Caco-2 (cell line): ENCODE measurements at regions of chr3 and their contacts with region 1.

Region 1: DNA sequence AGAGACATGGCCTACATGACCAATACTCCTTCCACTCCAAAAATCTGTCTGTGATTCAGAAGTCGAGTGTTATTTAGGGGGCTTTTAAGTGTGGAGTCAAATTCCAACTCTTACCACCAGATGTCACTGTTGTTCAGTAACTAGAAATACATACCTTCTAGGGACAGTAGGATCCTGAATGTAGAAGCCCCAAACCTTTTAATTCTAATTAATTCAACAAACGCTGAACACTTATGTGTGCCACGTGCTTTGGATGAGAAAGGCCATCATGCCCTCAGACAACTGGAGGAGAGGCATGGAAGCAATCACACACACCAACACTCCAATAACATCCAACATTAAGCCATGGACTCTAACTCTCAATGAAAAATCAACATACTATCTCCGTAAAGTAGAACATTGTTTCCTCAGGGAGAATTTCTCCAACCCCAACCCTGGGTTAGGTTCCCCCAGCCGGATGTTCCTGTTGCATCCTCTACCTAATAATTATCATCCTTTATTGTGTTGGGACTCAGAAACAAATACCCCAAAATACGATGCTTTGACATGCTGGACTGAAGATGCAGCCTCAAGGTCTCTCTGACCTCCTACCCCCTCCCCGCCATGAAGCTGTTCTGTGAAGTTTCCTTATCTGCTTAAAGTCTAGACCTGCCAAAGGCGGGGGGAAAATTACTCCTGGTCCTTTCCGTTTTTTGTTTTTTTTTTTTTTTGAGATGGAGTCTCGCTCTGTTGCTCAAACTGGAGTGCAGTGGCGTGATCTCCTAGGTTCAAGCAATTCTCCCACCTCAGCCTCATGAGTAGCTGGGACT is 8.0 kb upstream of the CCDC13 start:
- DNase-seq: peak in 1 of 2 experiments; percentile 57
- H3K4me3 ChIP-seq: no peak overlapping the region
- H3K4me3 Mint-ChIP-seq: no peak overlapping the region
- H3K27ac Mint-ChIP-seq: no peak overlapping the region
- H3K4me1 ChIP-seq: no peaks in the 10 kb centered on the region
- H3K4me1 Mint-ChIP-seq: no peaks in the 10 kb centered on the region
- H3K27me3 ChIP-seq: no peaks in the 10 kb centered on the region
- H3K27me3 Mint-ChIP-seq: no peaks in the 10 kb centered on the region
- CTCF ChIP-seq: peak; percentile 56 to 71

Region 2: GRCh38 chr3:42831321-42831713 is 50.2 kb after region 1 on chr3:
- CTCF ChIA-PET with region 1: interaction called, 19 read pairs
- POLR2A ChIA-PET with region 1: no interaction called
- intact Hi-C with region 1: loop called (anchors 1 kb)
- DNase-seq: peak; percentile 64 to 75
- H3K4me3 ChIP-seq: no peak overlapping the region
- H3K4me3 Mint-ChIP-seq: no peak overlapping the region
- H3K27ac Mint-ChIP-seq: no peak overlapping the region
- H3K4me1 ChIP-seq: peaks cover 36% of the 10 kb centered on the region
- H3K4me1 Mint-ChIP-seq: peaks cover 25% of the 10 kb centered on the region
- H3K27me3 ChIP-seq: no peaks in the 10 kb centered on the region
- H3K27me3 Mint-ChIP-seq: no peaks in the 10 kb centered on the region
- CTCF ChIP-seq: peak; percentile 73 to 76

Region 3: DNA sequence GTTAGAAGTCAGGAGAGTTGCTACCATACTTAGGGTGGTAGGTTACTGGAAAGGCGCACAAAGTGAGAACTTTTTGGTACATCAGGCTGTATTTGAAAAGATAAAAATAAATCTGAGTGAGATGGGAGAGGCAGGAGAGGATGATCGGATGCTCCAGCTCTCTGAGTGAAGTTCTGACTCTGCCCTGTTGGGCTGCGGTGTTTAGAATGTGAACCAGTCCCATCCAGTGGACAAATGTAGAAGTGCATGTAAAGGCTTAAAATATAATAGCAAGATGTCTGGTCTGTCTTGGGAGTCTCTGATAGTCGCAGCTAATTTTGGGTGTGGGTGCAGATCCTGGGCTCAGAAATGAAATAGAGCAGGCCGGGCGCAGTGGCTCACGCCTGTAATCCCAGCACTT is 58.5 kb after region 1 on chr3:
- CTCF ChIA-PET with region 1: interaction called, 7 read pairs
- POLR2A ChIA-PET with region 1: no interaction called
- intact Hi-C with region 1: loop called (anchors 1 kb)
- DNase-seq: peak; percentile 48 to 61
- H3K4me3 ChIP-seq: no peak overlapping the region
- H3K4me3 Mint-ChIP-seq: no peak overlapping the region
- H3K27ac Mint-ChIP-seq: no peak overlapping the region
- H3K4me1 ChIP-seq: no peaks in the 10 kb centered on the region
- H3K4me1 Mint-ChIP-seq: peaks cover 4% of the 10 kb centered on the region
- H3K27me3 ChIP-seq: no peaks in the 10 kb centered on the region
- H3K27me3 Mint-ChIP-seq: no peaks in the 10 kb centered on the region
- CTCF ChIP-seq: peak; percentile 73 to 77

Region 4: DNA sequence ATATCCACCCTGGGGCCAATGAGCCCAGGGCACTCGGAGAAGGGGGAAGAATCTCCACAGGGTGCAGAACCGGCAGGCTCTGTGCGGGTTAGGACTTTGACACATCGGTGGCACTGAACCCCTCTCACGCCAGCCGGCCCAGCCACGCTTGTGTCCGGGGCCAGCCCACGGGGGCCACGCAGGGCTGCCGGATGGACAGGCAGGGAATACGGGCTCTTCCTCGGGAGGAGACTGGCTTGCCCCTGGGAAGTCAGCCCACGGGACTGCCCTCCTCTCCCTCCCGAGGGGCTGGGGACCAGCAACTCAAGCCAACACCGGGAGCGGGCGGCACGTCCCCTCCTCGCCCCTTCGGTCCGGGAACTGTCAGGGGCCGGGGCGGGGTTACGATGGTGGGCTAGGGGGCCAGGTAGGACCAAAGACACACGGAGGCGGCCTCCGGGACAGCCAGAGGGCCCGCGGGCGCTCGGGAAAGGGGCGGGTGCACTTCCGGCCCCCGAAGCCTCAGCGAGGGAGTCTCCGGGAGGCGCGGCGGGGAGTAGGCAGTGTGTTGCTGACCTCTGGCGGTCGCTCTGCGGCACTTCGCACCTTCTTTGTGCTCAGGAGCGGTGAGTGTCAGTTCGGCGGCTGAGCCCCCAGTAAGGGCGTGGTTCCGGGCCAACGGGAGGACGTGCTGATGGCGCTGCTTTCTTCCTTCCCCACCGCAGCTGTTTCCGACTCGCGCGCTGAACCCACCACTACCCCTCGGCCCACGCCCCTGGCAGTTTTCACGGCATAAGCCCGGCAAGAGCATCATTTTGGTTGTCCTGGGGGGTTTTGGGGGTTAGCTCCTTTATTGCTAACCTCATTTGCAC is 99.7 kb after region 1 on chr3:
- CTCF ChIA-PET with region 1: interaction called, 4 read pairs
- POLR2A ChIA-PET with region 1: no interaction called
- intact Hi-C with region 1: loop called (anchors 1 kb)
- DNase-seq: peak; percentile 84 to 85
- H3K4me3 ChIP-seq: peak overlapping the region; percentile 58
- H3K4me3 Mint-ChIP-seq: peak overlapping the region; percentile 73
- H3K27ac Mint-ChIP-seq: peak overlapping the region; percentile 16
- H3K4me1 ChIP-seq: peaks cover 5% of the 10 kb centered on the region; the same call in 1 of the 2 replicates
- H3K4me1 Mint-ChIP-seq: peaks cover 5% of the 10 kb centered on the region
- H3K27me3 ChIP-seq: no peaks in the 10 kb centered on the region
- H3K27me3 Mint-ChIP-seq: no peaks in the 10 kb centered on the region
- CTCF ChIP-seq: peak; percentile 89 to 90